ENCODE measurements at regions of chr13 and their contacts with region 1.

Region 1: GRCh38 chr13:25186187-25186586 is 14.1 kb upstream of the AMER2 start:
- DNase-seq: no peak
- H3K4me3 ChIP-seq: no peak overlapping the region
- H3K27ac ChIP-seq: peak overlapping the region; percentile 75
- H3K4me1 ChIP-seq: peaks cover 30% of the 10 kb centered on the region
- H3K27me3 ChIP-seq: no peaks in the 10 kb centered on the region
- CTCF ChIP-seq: no peak

Region 2: GRCh38 chr13:25232937-25233515 is 46.8 kb after region 1 on chr13:
- CTCF ChIA-PET with region 1: no interaction called
- POLR2A ChIA-PET with region 1: interaction called, 10 read pairs
- intact Hi-C with region 1: no loop called
- DNase-seq: peak; percentile 70
- H3K4me3 ChIP-seq: no peak overlapping the region
- H3K27ac ChIP-seq: no peak overlapping the region
- H3K4me1 ChIP-seq: peaks cover 11% of the 10 kb centered on the region
- H3K27me3 ChIP-seq: no peaks in the 10 kb centered on the region
- CTCF ChIP-seq: peak; percentile 68

Region 3: GRCh38 chr13:25525884-25526283 is 339.7 kb after region 1 on chr13:
- CTCF ChIA-PET with region 1: no interaction called
- POLR2A ChIA-PET with region 1: interaction called, 15 read pairs
- intact Hi-C with region 1: no loop called
- DNase-seq: no peak
- H3K4me3 ChIP-seq: no peak overlapping the region
- H3K27ac ChIP-seq: no peak overlapping the region
- H3K4me1 ChIP-seq: no peaks in the 10 kb centered on the region
- H3K27me3 ChIP-seq: no peaks in the 10 kb centered on the region
- CTCF ChIP-seq: no peak

Measured in A673 (cell line).